A673 (cell line): ENCODE measurements at regions of chr20 and their contacts with region 1.

Region 1: DNA sequence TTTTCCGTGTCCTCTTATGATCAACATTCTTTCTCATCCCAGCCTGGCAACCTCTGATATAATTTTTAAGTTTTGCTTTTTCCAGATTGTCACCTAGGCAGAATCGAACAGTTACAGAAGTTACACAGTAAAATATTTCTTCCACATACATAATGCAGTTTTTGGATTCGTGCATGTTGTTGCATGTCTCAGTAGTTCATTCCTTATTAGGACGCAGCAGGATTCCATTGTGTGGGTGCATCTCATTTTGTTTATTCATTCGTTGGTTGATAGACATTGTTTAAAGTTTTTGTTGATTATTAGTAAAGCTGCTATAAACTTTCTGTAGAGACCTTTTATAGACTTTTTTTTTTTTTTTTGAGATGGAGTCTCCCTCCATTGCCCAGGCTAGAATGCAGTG is 284.3 kb upstream of the FERMT1 start:
- DNase-seq: no peak
- H3K4me3 ChIP-seq: no peak overlapping the region
- H3K27ac ChIP-seq: no peak overlapping the region
- H3K4me1 ChIP-seq: no peaks in the 10 kb centered on the region
- H3K27me3 ChIP-seq: peaks cover 8% of the 10 kb centered on the region
- CTCF ChIP-seq: no peak

Region 2: DNA sequence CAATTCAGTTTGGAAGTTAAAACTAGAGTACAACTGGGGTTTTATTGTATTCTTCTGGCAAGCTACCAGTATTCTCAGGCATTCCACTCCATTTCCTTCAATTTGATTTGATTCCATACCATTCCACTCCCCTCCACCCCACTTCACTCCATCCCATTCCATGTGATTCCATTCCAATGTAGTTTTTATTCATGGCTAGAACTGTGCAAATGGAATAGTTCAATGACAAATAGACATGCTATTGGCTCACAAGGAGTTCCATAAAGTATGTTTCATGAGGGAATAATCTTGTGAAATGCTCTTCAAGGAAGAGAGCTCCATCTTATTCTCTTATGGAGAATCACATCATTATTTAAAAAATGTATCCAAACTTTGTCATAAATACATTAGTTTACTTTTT is 75.3 kb after region 1 on chr20:
- CTCF ChIA-PET with region 1: no interaction called
- POLR2A ChIA-PET with region 1: interaction called, 11 read pairs
- intact Hi-C with region 1: no loop called
- DNase-seq: no peak
- H3K4me3 ChIP-seq: no peak overlapping the region
- H3K27ac ChIP-seq: no peak overlapping the region
- H3K4me1 ChIP-seq: no peaks in the 10 kb centered on the region
- H3K27me3 ChIP-seq: no peaks in the 10 kb centered on the region
- CTCF ChIP-seq: no peak